ENCODE measurements at regions of chr5 and their contacts with region 1.

Region 1: GRCh38 chr5:31186672-31187267 is 6.7 kb upstream of the CDH6 start:
- DNase-seq: no peak
- H3K4me3 ChIP-seq: no peak overlapping the region
- CTCF ChIP-seq: peak; percentile 60

Region 2: DNA sequence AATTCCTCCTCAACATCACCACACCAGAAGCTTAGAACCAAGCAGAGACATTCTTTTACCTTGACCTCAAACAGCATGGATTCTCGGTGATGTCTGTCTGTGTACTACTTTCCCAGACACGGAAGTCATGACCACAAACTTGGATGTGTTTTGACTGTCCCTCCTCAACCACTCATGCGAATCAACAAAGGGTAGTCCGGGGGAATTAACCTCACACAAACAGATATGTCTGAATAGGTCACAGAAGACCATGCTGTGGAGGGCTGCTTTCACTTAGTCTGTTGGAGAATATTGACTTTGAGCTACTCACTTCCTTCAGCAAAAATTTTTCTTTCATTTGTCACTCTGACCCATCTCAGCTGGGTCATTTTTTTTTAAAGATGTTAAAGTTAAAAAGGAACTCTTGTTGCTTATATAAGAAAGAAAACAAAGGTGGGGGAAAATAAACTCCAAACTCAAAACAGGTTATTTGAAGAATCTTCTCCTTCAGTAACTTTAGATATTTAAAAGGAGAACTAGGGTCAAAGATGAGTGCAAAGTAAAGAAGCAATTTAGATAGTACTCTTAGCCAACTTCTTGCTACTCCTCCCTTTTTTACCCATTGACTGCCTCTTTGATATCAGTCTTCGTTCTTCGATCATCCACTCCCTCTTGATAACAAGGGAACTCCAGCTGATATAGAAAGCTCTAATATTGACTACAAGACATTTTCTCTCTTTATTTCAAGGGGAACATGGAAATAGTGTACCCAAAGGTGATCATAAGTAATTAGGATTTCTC is 336.6 kb before region 1 on chr5:
- CTCF ChIA-PET with region 1: no interaction called
- POLR2A ChIA-PET with region 1: no interaction called
- DNase-seq: no peak
- H3K4me3 ChIP-seq: no peak overlapping the region
- CTCF ChIP-seq: no peak

Region 3: DNA sequence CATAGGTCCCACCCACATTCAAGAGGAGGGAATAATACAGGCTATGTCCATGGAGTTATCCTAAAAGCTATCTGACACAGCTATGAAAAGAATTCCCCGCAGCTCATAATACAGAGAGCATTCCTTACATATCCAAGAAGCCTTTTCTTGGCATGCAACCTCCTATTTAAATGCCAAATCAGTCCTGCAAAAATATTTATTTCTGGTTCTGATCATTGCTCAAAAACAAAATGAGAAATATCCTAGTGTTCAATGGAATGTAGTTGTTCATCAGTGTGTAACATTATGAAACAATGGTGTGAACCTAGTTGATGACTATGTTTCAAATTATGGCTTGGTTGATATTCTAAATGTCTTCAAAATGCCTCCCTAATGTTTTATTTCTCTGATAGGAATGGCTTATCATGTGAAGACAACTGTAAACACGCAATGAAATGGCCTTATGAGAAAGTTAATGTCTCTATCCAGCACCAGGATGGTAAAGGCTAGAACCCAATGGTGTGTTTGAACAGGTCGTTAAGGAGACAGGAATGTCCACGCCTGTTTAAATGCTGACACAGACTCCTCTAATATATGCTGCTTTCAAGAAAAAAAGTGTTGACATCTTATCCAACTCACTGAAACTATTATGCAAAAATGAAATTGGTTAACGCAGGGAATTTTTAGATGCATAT is 120.0 kb before region 1 on chr5:
- CTCF ChIA-PET with region 1: no interaction called
- POLR2A ChIA-PET with region 1: no interaction called
- DNase-seq: peak; percentile 5
- H3K4me3 ChIP-seq: no peak overlapping the region
- CTCF ChIP-seq: no peak

Region 4: DNA sequence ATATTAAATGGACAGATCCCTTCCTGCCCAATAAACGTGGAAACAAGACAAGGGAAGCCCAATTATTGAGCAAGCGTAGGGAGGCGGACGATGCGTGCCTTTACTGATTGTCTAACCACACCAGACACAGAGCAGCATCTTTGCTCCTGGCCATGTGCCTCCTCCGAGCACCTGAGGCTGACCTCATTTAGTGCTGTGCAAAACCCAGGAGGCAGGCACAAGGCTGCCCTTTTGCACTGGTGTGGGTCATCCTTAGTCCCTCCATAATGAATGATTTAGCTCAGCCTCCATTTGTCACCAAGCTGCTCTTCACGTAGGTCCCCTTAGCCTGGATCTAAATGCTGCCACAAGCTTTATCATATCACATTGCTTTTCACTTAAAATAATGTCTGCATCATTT is 17.4 kb before region 1 on chr5:
- CTCF ChIA-PET with region 1: interaction called, 15 read pairs
- POLR2A ChIA-PET with region 1: no interaction called
- DNase-seq: no peak
- H3K4me3 ChIP-seq: no peak overlapping the region
- CTCF ChIP-seq: no peak

Region 5: GRCh38 chr5:31213705-31214121 is 26.9 kb after region 1 on chr5:
- CTCF ChIA-PET with region 1: interaction called, 16 read pairs
- POLR2A ChIA-PET with region 1: no interaction called
- DNase-seq: no peak
- H3K4me3 ChIP-seq: no peak overlapping the region
- CTCF ChIP-seq: no peak

Region 6: DNA sequence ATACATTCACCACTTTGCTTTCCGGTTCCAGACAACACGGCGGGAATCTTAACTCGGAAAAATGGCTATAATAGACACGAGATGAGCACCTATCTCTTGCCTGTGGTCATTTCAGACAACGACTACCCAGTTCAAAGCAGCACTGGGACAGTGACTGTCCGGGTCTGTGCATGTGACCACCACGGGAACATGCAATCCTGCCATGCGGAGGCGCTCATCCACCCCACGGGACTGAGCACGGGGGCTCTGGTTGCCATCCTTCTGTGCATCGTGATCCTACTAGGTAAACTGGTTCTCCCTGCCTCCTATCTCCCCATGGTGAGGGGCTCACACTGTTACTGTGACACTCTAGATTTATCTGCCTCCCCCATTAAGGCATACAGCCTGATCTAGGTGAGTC is 130.9 kb after region 1 on chr5:
- CTCF ChIA-PET with region 1: no interaction called
- POLR2A ChIA-PET with region 1: no interaction called
- DNase-seq: no peak
- H3K4me3 ChIP-seq: no peak overlapping the region
- CTCF ChIP-seq: no peak